ENCODE measurements at regions of chr3 and their contacts with region 1.

Region 1: DNA sequence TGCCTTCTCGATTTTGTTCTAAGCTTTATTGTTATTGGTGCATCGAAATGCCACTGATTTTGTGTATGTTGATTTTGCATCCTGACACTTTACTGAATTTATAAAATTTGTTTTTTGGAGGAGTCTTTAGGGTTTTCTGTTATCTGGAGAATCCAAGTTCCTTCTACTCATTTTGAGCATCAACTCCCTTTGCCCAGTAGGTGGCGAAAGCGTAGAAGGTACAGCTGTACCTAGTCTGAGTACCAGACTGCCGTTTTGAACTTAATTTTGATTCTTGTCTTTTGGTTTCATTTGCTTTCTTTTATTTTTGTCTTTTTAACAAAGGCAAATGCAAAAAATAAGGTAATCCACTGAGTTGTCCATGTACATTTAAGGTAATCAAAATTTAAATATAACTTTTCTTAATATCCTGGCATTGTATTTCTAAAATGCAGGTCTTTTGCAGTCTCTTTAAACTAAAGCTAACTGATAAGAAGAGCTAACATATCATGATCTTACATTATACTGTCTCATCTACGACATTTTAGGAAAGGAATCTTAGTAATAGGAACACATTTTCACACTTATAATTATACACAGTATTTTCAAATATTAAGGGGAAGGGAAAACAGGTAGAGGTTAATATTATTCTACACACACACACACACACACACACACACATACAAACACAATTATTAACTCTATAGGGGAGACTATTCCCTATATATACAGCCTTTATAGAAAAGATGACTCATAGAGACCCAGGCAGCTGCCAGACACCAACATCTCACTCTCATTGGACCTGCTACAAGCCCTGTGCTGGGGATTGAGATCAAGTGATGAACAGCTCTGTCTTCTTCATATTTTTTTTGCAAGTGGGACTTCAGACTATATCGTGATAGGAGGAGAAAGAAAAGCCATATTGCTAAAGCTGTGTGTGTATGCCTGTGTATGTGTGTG is 71.7 kb downstream of the SYNPR start:
- DNase-seq: peak; percentile 47
- ATAC-seq: peak; percentile 57 to 59

Region 2: DNA sequence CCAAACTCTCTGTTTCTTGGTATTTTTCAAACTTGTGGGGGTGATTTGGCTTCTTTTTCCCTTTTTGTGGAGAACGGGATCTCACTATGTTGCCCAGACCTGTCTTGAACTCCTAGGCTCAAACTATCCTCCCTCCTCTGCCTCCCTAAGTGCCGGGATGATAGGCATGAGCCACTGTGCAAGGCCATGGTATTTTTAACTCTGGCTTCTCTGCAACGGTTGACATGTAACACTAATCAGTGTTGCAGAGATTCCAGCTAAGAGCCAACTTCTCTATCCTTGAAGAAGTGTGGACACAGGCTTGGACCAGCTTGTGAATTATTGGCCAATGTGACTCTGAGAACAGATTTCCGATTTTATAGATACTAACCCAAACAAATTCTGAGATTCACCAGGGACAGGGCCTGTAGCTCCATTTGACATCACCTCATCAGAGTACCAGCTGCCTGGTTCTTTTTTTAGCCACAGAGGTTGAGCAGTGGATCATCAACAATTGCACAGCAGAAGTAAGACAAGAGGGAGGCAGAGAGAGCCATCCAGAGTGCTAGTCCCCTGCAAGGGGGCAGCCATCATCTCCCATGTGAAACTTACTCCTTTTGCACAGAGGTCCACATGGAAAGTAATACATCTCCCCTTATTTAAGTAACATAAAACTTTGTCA is 169.9 kb before region 1 on chr3:
- intact Hi-C with region 1: no loop called
- DNase-seq: no peak
- ATAC-seq: peak; percentile 61 to 68

Region 3: DNA sequence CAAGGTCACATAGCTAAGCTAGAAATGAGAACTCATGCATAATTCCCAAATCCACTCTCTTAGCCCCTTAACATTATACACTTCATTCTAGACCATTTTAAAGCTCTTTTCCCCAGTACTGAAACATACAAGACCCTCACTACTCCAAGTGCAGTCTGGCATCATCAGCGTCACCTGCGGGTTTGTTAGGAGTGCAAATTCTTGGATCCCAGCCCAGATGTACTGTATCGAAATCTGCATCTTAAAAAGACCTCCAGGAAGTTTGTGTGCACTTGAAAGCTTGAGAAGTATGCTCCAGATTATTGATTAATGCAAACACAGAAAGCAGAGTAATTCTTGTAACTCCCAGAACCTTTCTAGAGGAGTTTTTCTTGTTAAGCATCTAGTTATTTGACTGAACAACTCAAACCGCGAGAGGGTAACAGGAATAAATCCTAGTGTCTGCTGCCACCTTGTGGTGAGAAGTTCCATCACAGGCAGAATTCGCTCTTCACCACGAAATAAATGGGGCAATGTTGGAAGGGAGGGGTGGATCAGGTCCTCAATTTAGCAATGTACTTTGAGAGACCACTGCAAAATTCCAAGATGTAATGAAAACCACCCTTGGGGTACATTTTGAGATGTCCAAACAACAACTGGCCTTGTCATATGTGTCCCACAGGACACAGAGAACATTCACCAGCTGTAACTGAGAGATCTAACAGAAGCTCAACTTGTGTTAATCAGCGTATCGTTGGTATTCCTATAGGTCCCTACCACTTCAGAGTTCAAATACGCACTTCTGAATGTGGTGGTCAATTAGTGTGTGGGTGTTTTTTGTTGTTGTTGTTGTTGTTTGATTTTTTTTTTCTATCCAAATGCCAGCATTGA is 468.7 kb after region 1 on chr3:
- intact Hi-C with region 1: loop called (anchors 1 to 5 kb)
- DNase-seq: peak; percentile 50
- ATAC-seq: peak; percentile 51 to 63

Region 4: DNA sequence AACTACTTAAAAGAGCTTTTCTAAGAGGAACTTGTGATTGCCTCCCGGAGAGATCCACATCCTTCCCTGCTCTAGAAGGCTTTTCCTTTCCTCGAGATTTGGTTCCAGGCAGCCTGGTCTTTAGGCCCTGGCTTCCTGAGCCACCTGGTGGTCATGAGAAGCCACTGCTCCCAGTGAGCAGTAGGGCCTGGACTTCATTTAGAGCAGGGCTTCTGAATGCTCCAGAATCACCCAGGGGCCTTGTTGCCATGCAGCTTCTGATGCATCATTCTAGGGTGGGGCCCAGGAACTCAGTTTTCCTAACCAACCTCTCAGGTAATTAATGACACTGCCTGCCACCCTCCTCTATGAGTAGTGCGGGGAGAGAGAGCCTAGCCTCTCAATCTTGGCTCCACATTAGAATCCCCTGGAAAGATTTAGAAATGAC is 643.8 kb after region 1 on chr3:
- intact Hi-C with region 1: loop called in 1 of 2 experiments (anchors 10 kb)
- DNase-seq: peak; percentile 70
- ATAC-seq: peak; percentile 93 to 95

Region 5: GRCh38 chr3:64484289-64484992 is 1134.6 kb after region 1 on chr3:
- intact Hi-C with region 1: loop called in 1 of 2 experiments (anchors 10 kb)
- DNase-seq: peak; percentile 76
- ATAC-seq: peak; percentile 93 to 95